ENCODE measurements at regions of chr1 and their contacts with region 1.

Region 1: DNA sequence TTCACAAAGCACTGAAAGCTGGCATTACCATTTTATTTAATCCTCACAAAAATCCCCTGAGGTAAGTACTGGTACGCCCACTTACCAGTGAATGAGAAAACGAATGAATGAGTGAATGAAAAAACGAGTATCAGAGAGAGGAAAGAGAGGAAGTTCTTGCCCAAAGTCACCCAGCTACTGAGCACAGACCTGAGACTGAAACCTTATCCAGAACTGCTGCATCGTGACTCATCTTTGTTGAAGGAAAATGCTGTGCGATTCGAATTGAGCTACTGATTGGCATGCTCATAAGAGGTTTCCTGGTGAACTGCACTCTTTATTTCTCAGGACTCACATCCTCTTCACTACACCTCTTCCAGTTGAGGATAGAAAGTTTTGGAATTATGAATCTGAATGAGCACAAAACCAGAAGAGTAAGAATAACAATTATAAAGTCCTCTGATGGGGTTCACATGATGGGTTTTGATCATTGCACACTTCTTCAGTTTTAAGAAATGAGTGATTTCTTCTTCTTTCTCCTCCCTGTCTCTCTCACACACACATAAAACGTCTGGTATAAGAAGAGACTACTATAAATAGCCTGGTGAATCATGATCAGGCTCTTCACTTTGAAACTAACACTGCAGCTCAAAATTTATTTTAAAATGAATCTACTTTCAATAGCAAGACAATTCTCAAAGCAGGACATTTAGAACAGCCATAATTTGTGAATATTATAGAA is 32.1 kb downstream of the IL12RB2 start:
- DNase-seq: peak; percentile 75
- H3K4me3 Mint-ChIP-seq: peak overlapping the region; percentile 1
- H3K27ac Mint-ChIP-seq: peak overlapping the region; percentile 97
- H3K4me1 Mint-ChIP-seq: peaks cover 83% of the 10 kb centered on the region
- H3K27me3 Mint-ChIP-seq: no peaks in the 10 kb centered on the region

Region 2: GRCh38 chr1:66981679-66982078 is 358.1 kb before region 1 on chr1:
- CTCF ChIA-PET with region 1: no interaction called
- intact Hi-C with region 1: loop called (anchors 5 kb)
- DNase-seq: peak; percentile 71
- H3K4me3 Mint-ChIP-seq: peak overlapping the region; percentile 51
- H3K27ac Mint-ChIP-seq: peak overlapping the region; percentile 87
- H3K4me1 Mint-ChIP-seq: peaks cover 50% of the 10 kb centered on the region
- H3K27me3 Mint-ChIP-seq: no peaks in the 10 kb centered on the region

Region 3: GRCh38 chr1:67162957-67163356 is 176.8 kb before region 1 on chr1:
- CTCF ChIA-PET with region 1: no interaction called
- intact Hi-C with region 1: loop called (anchors 1 kb)
- DNase-seq: peak; percentile 76
- H3K4me3 Mint-ChIP-seq: peak overlapping the region; percentile 42
- H3K27ac Mint-ChIP-seq: peak overlapping the region; percentile 83
- H3K4me1 Mint-ChIP-seq: peaks cover 63% of the 10 kb centered on the region
- H3K27me3 Mint-ChIP-seq: no peaks in the 10 kb centered on the region

Region 4: DNA sequence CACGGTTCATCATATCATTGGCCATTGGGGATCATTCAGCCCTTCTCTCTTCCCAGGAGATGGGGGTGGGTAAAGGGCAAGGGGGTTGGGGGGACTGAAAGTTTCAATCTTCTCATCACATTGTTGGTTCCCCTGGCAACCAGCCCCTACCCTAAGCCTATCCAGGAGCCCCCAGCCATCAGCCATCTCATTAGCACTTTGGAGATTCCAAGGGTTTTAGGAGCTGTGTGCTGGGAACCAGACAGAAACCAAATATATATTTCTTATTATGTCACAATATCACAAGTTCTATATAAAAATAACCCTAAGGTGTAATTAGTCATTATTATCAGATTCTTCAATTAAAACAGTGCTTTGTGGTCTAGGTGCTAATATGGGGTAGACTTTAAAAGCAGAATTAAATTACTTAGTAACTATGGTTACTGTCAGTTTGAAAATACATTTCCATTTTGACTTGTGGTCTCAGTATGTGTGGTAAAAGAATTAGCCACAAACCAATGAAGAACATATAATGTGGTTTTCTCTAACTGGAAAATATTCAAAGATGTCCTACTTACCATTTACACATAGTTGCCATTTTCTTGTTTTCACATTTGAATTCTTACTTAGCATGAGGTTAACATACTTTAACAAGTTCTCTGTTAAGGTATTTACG is 145.4 kb before region 1 on chr1:
- CTCF ChIA-PET with region 1: interaction called, 3 read pairs
- intact Hi-C with region 1: loop called (anchors 1 kb)
- DNase-seq: no peak
- H3K4me3 Mint-ChIP-seq: no peak overlapping the region
- H3K27ac Mint-ChIP-seq: no peak overlapping the region
- H3K4me1 Mint-ChIP-seq: peaks cover 39% of the 10 kb centered on the region
- H3K27me3 Mint-ChIP-seq: no peaks in the 10 kb centered on the region

Region 5: DNA sequence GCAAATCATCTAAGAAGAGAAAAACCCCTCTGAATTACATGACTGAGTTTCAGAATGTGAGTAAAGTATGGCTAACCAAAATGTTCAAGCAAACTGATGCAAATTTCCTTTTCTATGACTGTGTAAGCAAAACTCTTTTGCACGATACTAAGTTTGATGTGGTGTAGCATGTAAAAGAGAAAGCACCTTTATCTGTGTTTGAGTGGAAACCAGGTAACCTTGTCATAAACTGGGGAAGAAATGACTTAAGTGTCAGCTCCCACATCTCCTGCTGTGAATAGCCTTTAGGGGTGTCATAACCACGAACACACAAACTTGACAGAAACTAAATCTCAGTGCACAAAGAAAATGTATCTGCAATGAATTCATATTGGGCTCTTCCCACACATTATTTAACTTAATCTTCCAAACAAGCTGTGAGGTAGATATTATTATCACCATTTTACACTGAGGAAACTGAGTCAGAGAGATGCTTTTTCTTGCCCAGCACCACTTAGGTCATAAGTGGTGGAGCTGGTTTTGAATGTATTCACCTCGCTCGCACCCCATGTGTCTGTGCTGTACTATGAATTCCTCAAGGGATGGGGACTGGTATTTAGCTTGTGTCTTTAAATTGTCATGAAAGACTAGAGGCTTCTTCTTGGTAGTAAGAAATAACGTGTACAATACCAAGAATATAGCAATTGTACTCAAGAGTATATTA is 65.0 kb before region 1 on chr1:
- CTCF ChIA-PET with region 1: interaction called, 10 read pairs
- intact Hi-C with region 1: loop called (anchors 1 kb)
- DNase-seq: peak; percentile 55
- H3K4me3 Mint-ChIP-seq: no peak overlapping the region
- H3K27ac Mint-ChIP-seq: peak overlapping the region; percentile 90
- H3K4me1 Mint-ChIP-seq: peaks cover 55% of the 10 kb centered on the region
- H3K27me3 Mint-ChIP-seq: no peaks in the 10 kb centered on the region

Region 6: GRCh38 chr1:67304023-67304422 is 35.8 kb before region 1 on chr1:
- CTCF ChIA-PET with region 1: no interaction called
- intact Hi-C with region 1: loop called (anchors 1 kb)
- DNase-seq: no peak
- H3K4me3 Mint-ChIP-seq: no peak overlapping the region
- H3K27ac Mint-ChIP-seq: peak overlapping the region; percentile 86
- H3K4me1 Mint-ChIP-seq: peaks cover 23% of the 10 kb centered on the region
- H3K27me3 Mint-ChIP-seq: no peaks in the 10 kb centered on the region

Region 7: GRCh38 chr1:67404212-67404620 is 64.4 kb after region 1 on chr1:
- CTCF ChIA-PET with region 1: no interaction called
- intact Hi-C with region 1: loop called (anchors 1 kb)
- DNase-seq: no peak
- H3K4me3 Mint-ChIP-seq: no peak overlapping the region
- H3K27ac Mint-ChIP-seq: peak overlapping the region; percentile 50
- H3K4me1 Mint-ChIP-seq: peaks cover 19% of the 10 kb centered on the region
- H3K27me3 Mint-ChIP-seq: no peaks in the 10 kb centered on the region

Measured in activated naive CD4-positive, alpha-beta T cell treated with anti-CD3 and anti-CD28 coated beads for 36 hours (primary cell).